ENCODE measurements at regions of chr14 and their contacts with region 1.

Region 1: GRCh38 chr14:81464247-81465002 is 64.3 kb upstream of the STON2 start:
- ATAC-seq: peak in 4 of 8 experiments; percentile 52 to 75 (median 67)
- H3K4me3 ChIP-seq: peak overlapping the region in 4 of 5 donors; percentile 11 to 31 (median 22)
- H3K27ac ChIP-seq: no peak overlapping the region
- H3K4me1 ChIP-seq: peaks cover 0 to 4% of the 10 kb centered on the region in 2 donors

Region 2: GRCh38 chr14:80954687-80955299 is 509.6 kb before region 1 on chr14:
- in situ Hi-C with region 1: loop called in 4 of 9 experiments (anchors 25 kb)
- ATAC-seq: peak; percentile 90 to 98 (median 97)
- H3K4me3 ChIP-seq: peak overlapping the region; percentile 34 to 47 (median 38)
- H3K27ac ChIP-seq: no peak overlapping the region
- H3K4me1 ChIP-seq: no peaks in the 10 kb centered on the region

Region 3: GRCh38 chr14:80987235-80988032 is 477.0 kb before region 1 on chr14:
- in situ Hi-C with region 1: loop called in 3 of 9 experiments (anchors 10 to 25 kb)
- ATAC-seq: peak; percentile 72 to 99 (median 86)
- H3K4me3 ChIP-seq: no peak overlapping the region
- H3K27ac ChIP-seq: no peak overlapping the region
- H3K4me1 ChIP-seq: no peaks in the 10 kb centered on the region

Region 4: DNA sequence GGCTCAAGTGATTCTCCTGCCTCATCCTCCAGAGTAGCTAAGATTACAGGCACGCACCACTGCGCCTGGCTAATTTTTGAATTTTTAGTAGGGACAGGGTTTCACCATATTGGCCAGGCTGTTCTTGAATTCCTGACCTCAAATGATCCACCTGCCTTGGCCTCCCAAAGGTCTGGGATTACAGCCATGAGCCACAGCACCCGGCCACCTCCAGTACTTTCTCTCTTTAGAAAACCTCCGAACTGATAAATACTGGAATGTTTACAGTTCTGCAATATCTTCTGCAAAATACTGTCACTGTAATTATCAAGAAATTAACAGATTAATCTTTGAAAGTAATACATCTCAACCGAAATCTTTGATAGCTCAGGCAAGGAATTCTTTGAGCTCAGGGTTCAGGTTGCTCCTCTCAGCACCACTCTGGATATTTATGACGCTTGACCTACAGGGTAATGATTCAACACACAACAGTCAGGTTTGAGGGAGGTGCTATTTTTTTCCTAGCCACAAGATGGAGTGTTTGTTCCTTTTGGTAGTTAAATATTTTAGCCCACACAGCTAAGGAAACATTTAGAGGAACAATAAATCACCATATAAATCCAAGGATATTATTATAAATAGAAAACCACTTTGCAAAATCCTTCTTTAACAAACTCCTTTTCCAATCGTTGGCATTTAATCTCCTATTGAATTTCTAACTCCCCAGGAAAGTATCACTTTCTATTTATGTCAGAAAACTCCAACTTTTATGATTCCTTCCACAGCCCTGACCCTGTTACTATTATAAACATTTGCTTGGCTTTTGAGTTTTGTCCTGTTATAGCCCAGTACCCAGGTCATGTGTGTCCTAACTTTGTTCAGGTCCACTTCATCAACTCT is 195.1 kb before region 1 on chr14:
- in situ Hi-C with region 1: loop called in 7 of 9 experiments (anchors 10 to 25 kb)
- ATAC-seq: peak; percentile 63 to 87 (median 80)
- H3K4me3 ChIP-seq: no peak overlapping the region
- H3K27ac ChIP-seq: no peak overlapping the region
- H3K4me1 ChIP-seq: peaks cover 8 to 68% of the 10 kb centered on the region in 2 donors

Region 5: GRCh38 chr14:81324018-81324417 is 140.4 kb before region 1 on chr14:
- in situ Hi-C with region 1: no loop called
- ATAC-seq: peak; percentile 83 to 99 (median 90)
- H3K4me3 ChIP-seq: peak overlapping the region in 2 of 5 donors; percentile 15 to 24
- H3K27ac ChIP-seq: no peak overlapping the region
- H3K4me1 ChIP-seq: peaks cover 7 to 19% of the 10 kb centered on the region in 2 donors

Region 6: GRCh38 chr14:81550001-81550637 is 85.7 kb after region 1 on chr14:
- in situ Hi-C with region 1: no loop called
- ATAC-seq: no peak
- H3K4me3 ChIP-seq: no peak overlapping the region
- H3K27ac ChIP-seq: no peak overlapping the region
- H3K4me1 ChIP-seq: no peaks in the 10 kb centered on the region